ENCODE measurements at regions of chr12 and their contacts with region 1.

Region 1: DNA sequence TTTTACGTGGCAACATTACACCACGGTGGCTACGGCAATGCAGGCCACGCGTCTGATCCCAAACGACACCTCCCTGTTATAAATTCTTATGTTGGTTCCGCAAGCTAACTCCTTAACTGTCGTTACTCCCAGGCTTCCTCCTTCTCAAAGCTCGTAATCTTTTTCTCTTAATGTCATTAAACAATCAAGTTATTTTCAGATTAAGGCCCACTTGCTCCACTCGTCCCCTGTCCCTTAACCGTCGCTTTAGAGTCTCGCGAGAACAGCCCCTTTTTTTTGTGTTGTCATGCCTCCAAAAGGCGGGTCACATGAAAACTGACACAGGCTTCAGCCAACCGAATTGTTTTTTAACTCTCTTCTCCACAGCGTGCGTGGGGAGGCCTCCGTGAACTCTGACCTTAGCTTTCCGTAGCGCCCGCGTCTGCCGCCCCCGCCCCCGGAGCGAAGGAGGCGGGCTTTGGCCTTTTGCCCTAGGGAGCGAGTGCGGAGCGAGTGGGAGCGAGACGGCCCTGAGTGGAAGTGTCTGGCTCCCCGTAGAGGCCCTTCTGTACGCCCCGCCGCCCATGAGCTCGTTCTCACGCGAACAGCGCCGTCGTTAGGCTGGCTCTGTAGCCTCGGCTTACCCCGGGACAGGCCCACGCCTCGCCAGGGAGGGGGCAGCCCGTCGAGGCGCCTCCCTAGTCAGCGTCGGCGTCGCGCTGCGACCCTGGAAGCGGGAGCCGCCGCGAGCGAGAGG is at the start of gene CAND1:
- DNase-seq: peak; percentile 96
- H3K4me3 Mint-ChIP-seq: peak within 1 kb of the TSS; percentile 95
- H3K27ac Mint-ChIP-seq: peak within 1 kb of the TSS; percentile 98
- H3K4me1 Mint-ChIP-seq: peaks cover 31% of the 10 kb centered on the region
- H3K27me3 Mint-ChIP-seq: no peaks in the 10 kb centered on the region
- total RNA-seq, gene CAND1: 213 to 219 TPM

Region 2: GRCh38 chr12:66130277-66131066 is 1138.6 kb before region 1 on chr12 and contains the start of gene LLPH:
- CTCF ChIA-PET with region 1: interaction called, 3 read pairs
- POLR2A ChIA-PET with region 1: no interaction called
- intact Hi-C with region 1: loop called (anchors 2 kb)
- DNase-seq: peak; percentile 94
- H3K4me3 Mint-ChIP-seq: peak within 1 kb of the TSS; percentile 96
- H3K27ac Mint-ChIP-seq: peak within 1 kb of the TSS; percentile 94
- H3K4me1 Mint-ChIP-seq: peaks cover 50% of the 10 kb centered on the region
- H3K27me3 Mint-ChIP-seq: no peaks in the 10 kb centered on the region
- total RNA-seq, gene LLPH: 29.1 to 31.2 TPM

Region 3: DNA sequence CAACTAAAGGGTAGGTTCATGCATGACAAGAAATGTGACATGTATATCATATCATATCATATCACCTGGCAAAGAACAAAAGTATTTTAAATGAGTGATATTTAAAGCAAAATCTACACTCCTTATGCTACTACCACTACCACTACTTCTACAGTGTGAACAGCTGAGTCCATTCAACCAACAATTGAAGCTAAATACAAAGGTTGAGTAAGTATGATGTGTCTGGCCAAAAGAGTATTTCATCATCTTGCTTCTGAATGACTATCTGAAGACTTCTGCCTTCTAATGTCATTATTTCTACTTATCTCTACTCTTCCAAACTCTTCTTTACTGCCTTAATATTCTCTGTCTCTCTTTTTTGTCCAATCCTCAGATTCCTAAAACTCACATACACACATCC is 292.5 kb before region 1 on chr12:
- CTCF ChIA-PET with region 1: no interaction called
- POLR2A ChIA-PET with region 1: no interaction called
- intact Hi-C with region 1: no loop called
- DNase-seq: no peak
- H3K4me3 Mint-ChIP-seq: no peak overlapping the region
- H3K27ac Mint-ChIP-seq: no peak overlapping the region
- H3K4me1 Mint-ChIP-seq: peaks cover 9% of the 10 kb centered on the region
- H3K27me3 Mint-ChIP-seq: peaks cover 12% of the 10 kb centered on the region

Region 4: DNA sequence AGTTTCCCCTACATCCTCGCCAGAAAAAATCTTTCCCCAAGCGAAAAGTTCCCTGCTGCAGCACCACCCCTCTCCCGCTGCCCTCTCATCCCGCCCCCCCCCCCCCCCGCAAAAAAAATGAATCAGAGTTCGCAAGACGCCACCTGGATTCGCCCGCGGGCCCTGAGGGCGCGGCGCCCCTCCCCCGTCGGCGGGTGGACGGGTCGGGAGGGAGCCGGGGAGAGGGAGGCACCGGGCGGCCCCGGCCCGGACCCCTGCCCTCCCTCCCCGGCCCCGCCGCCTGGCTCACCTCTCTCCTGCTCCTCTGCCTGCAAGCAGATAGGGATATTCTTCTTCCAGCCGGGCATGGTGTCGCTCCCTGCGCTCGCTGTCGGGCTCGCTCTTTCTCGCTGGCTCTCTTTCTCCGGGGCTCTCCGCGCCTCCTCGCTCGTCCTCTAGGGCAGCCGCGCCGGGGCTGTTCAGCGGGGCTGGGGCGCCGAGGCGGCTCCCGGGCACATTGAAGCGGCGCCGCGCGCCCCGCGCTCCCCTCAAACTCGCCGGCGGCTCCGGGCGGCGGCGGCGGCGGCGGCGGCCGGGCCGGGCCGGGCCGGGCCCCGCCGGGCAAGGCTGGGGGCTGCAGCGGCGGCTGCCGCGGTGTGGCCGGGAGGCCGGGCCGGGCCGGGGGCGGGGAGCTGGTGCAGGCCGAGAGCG is 200.2 kb before region 1 on chr12:
- CTCF ChIA-PET with region 1: no interaction called
- POLR2A ChIA-PET with region 1: interaction called, 8 read pairs
- intact Hi-C with region 1: loop called (anchors 1 kb)
- DNase-seq: peak; percentile 52
- H3K4me3 Mint-ChIP-seq: peak overlapping the region; percentile 85
- H3K27ac Mint-ChIP-seq: no peak overlapping the region
- H3K4me1 Mint-ChIP-seq: peaks cover 20% of the 10 kb centered on the region
- H3K27me3 Mint-ChIP-seq: peaks cover 35% of the 10 kb centered on the region

Region 5: GRCh38 chr12:67280572-67280971 is 11.5 kb after region 1 on chr12:
- CTCF ChIA-PET with region 1: interaction called, 10 read pairs
- POLR2A ChIA-PET with region 1: interaction called, 9 read pairs
- intact Hi-C with region 1: no loop called
- DNase-seq: no peak
- H3K4me3 Mint-ChIP-seq: no peak overlapping the region
- H3K27ac Mint-ChIP-seq: no peak overlapping the region
- H3K4me1 Mint-ChIP-seq: peaks cover 63% of the 10 kb centered on the region
- H3K27me3 Mint-ChIP-seq: no peaks in the 10 kb centered on the region

Region 6: DNA sequence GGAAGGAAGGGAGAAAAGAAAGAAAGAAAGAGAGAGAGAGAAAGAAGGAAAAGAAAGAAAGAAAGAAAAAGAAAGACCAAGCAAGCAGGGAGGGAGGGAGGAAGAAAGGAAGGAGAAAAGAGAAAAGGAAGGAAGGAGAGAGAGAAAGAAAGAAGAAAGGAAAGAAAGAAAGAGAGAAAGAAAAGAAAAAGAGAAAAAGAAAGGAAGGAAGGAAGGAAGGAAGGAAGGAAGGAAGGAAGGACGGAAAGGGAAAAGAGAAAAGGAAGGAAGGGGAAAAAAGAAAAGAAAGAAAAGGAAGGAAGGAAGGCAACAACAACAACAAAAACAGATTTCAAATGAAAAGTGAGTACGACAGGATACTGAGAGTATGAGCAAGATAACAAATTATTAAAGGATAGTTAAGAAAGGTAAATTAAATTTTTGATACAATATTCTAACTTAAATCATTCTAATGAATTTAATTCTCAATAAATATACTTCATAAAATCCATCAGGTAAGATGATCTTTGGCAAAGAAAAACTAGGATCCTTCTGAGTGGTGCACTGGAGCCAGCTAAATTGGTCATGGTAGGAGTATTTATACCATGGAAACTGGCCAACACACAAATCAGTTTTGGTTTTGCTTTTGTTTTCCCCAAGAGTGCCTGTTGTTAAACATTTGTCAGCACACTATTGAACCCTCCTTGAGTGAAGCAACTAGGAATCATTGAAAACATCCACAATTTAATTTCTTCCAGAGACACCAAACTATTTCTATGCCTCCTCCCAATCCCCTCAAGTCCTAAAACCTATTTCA is 323.4 kb after region 1 on chr12:
- CTCF ChIA-PET with region 1: no interaction called
- POLR2A ChIA-PET with region 1: no interaction called
- intact Hi-C with region 1: loop called (anchors 5 kb)
- DNase-seq: no peak
- H3K4me3 Mint-ChIP-seq: no peak overlapping the region
- H3K27ac Mint-ChIP-seq: peak overlapping the region; percentile 67
- H3K4me1 Mint-ChIP-seq: peaks cover 47% of the 10 kb centered on the region
- H3K27me3 Mint-ChIP-seq: no peaks in the 10 kb centered on the region

Region 7: GRCh38 chr12:68097386-68097785 is 828.3 kb after region 1 on chr12:
- CTCF ChIA-PET with region 1: no interaction called
- POLR2A ChIA-PET with region 1: no interaction called
- intact Hi-C with region 1: no loop called
- DNase-seq: no peak
- H3K4me3 Mint-ChIP-seq: no peak overlapping the region
- H3K27ac Mint-ChIP-seq: no peak overlapping the region
- H3K4me1 Mint-ChIP-seq: no peaks in the 10 kb centered on the region
- H3K27me3 Mint-ChIP-seq: no peaks in the 10 kb centered on the region

Measured in activated CD4-positive, alpha-beta memory T cell treated with anti-CD3 and anti-CD28 coated beads for 36 hours (primary cell).